PC-9 (cell line): ENCODE measurements at regions of chr4 and their contacts with region 1.

Region 1: DNA sequence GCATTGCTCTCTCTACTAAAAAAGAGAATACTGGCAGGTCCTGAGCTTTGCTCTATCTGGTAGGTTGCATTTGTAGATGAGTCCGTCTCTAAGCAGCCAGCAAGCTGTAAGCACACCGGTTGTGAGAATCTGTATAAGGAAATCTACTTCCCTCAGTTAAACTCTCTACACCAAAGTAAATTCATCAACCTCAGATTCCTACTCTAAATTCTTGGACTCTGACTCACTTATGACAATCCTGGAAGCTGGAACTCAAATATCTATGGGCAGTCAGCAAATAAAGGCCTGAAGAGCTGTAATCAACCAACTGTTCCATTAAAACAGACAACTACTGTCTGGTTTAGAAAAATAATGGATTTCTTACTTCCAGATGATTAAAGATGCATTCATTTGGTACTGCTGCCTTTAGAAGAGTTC is 37.9 kb downstream of the FAT1 start:
- DNase-seq: peak; percentile 32 to 83
- H3K4me3 ChIP-seq: no peak overlapping the region
- H3K27ac ChIP-seq: peak overlapping the region; percentile 38; the same call in 1 of the 2 replicates
- H3K4me1 ChIP-seq: peaks cover 15% of the 10 kb centered on the region
- H3K27me3 ChIP-seq: no peaks in the 10 kb centered on the region
- CTCF ChIP-seq: no peak

Region 2: GRCh38 chr4:186543206-186543605 is 142.6 kb before region 1 on chr4:
- CTCF ChIA-PET with region 1: no interaction called
- POLR2A ChIA-PET with region 1: no interaction called
- intact Hi-C with region 1: no loop called
- DNase-seq: no peak
- H3K4me3 ChIP-seq: no peak overlapping the region
- H3K27ac ChIP-seq: no peak overlapping the region
- H3K4me1 ChIP-seq: no peaks in the 10 kb centered on the region
- H3K27me3 ChIP-seq: no peaks in the 10 kb centered on the region
- CTCF ChIP-seq: no peak

Region 3: GRCh38 chr4:186627226-186627865 is 58.4 kb before region 1 on chr4:
- CTCF ChIA-PET with region 1: no interaction called
- POLR2A ChIA-PET with region 1: no interaction called
- intact Hi-C with region 1: loop called (anchors 5 kb)
- DNase-seq: peak in 1 of 2 experiments; percentile 25
- H3K4me3 ChIP-seq: no peak overlapping the region
- H3K27ac ChIP-seq: no peak overlapping the region
- H3K4me1 ChIP-seq: no peaks in the 10 kb centered on the region
- H3K27me3 ChIP-seq: no peaks in the 10 kb centered on the region
- CTCF ChIP-seq: no peak

Region 4: DNA sequence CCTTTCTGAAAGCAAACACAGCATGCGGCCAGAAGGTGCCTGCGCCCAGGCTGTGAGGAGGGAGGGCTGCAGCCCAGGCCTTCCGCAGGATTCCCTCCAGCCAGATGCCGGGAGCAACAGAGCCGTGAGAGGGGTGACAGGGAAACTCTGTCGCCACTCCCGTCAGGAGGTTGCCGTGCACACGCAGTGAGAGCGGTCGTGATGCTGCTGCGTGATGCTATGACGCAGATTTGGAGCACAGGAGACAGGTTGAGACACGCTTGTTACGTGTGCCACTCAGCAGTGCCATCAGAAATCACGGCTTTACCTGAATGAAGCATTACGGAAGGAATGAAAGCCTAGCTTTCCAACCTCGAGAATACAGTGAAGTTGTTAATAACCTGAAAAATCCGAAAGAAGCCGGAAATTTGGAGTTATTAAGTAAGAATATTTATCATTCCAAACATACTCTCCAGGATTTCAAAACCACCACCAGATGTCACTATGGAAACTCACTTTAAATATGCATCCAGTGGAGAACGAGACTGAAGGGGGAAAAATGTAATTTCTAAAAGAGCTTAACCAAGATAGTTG is 16.5 kb before region 1 on chr4:
- CTCF ChIA-PET with region 1: no interaction called
- POLR2A ChIA-PET with region 1: no interaction called
- intact Hi-C with region 1: no loop called
- DNase-seq: no peak
- H3K4me3 ChIP-seq: no peak overlapping the region
- H3K27ac ChIP-seq: no peak overlapping the region
- H3K4me1 ChIP-seq: no peaks in the 10 kb centered on the region
- H3K27me3 ChIP-seq: no peaks in the 10 kb centered on the region
- CTCF ChIP-seq: peak; percentile 52

Region 5: GRCh38 chr4:186699290-186699689 is 13.5 kb after region 1 on chr4:
- CTCF ChIA-PET with region 1: no interaction called
- POLR2A ChIA-PET with region 1: no interaction called
- intact Hi-C with region 1: loop called (anchors 1 kb)
- DNase-seq: peak in 1 of 2 experiments; percentile 49
- H3K4me3 ChIP-seq: no peak overlapping the region
- H3K27ac ChIP-seq: no peak overlapping the region
- H3K4me1 ChIP-seq: no peaks in the 10 kb centered on the region
- H3K27me3 ChIP-seq: no peaks in the 10 kb centered on the region
- CTCF ChIP-seq: no peak